Spleen (tissue), 13 donors: ENCODE measurements at regions of chr6 and their contacts with region 1.

Region 1: GRCh38 chr6:5053038-5053437 is 32.1 kb upstream of the PPP1R3G start:
- DNase-seq: no peak
- H3K4me3 ChIP-seq: peak overlapping the region in 1 of 8 donors; percentile 12
- H3K27ac ChIP-seq: peak overlapping the region in 5 of 8 donors; percentile 30 to 65 (median 52)
- H3K4me1 ChIP-seq: peaks cover 0 to 20% (median 6%) of the 10 kb centered on the region in 6 donors
- H3K27me3 ChIP-seq: no peaks in the 10 kb centered on the region
- CTCF ChIP-seq: no peak
- POLR2A ChIP-seq: no peak

Region 2: DNA sequence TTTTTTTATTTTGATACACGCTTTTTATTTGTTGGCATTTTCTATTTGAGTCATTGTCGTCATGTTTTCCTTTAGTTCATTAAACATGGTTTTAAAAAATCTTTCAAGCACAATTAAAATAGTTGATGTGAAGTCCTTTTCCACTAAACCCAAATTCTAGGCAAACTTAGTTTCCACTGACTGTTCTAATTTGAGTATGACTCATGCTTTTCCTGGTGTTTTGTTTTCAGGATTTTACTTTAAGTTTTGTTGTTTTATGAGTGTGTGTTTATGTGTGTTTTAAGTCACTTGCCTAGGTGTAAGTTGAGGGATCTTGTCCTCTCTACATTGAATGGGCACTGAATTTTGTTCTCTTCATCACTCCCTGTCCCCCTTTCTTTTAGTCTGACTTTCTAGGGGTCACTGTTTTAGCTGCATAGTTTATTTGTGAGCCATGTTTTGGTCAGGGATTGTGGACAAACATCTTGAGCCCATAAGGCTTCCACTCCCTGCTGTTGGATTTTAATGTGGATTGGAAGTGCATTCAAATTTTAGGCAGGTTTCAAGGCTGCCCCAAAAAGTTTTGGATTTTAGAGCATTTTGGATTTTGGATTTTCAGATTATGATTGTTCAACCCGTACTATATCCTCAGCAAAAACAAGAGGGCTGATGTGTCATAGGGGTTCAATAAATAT is 182.1 kb before region 1 on chr6:
- intact Hi-C with region 1: no loop called
- DNase-seq: no peak
- H3K4me3 ChIP-seq: no peak overlapping the region
- H3K27ac ChIP-seq: no peak overlapping the region
- H3K4me1 ChIP-seq: peaks cover 0 to 7% (median 2%) of the 10 kb centered on the region in 6 donors
- H3K27me3 ChIP-seq: no peaks in the 10 kb centered on the region
- CTCF ChIP-seq: no peak
- POLR2A ChIP-seq: no peak

Region 3: GRCh38 chr6:4941782-4942672 is 111.0 kb before region 1 on chr6:
- intact Hi-C with region 1: no loop called
- DNase-seq: no peak
- H3K4me3 ChIP-seq: no peak overlapping the region
- H3K27ac ChIP-seq: peak overlapping the region in 4 of 8 donors; percentile 6 to 31 (median 20)
- H3K4me1 ChIP-seq: peaks cover 7 to 38% (median 19%) of the 10 kb centered on the region in 6 donors
- H3K27me3 ChIP-seq: no peaks in the 10 kb centered on the region
- CTCF ChIP-seq: no peak
- POLR2A ChIP-seq: no peak

Region 4: DNA sequence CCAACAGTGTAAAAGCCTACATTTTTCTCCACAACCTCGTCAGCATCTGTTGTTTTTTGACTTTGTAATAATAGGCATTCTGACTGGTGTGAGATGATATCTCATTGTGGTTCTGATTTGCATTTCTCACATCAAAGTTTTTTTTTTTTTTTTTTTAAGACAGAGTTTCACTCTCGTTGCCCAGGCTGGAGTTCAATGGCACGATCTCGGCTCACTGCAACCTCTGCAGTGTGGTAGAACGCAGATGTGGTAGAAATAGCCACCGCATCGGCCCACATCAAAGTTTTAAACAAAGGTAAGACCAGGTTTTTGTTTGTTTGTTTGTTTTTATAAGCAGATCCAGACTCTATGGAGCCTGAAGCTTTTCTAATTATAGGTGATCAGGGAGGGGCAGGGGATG is 19.4 kb after region 1 on chr6:
- intact Hi-C with region 1: loop called (anchors 2 kb)
- DNase-seq: no peak
- H3K4me3 ChIP-seq: no peak overlapping the region
- H3K27ac ChIP-seq: no peak overlapping the region
- H3K4me1 ChIP-seq: peaks cover 0 to 4% (median 0%) of the 10 kb centered on the region in 6 donors
- H3K27me3 ChIP-seq: no peaks in the 10 kb centered on the region
- CTCF ChIP-seq: no peak
- POLR2A ChIP-seq: no peak